Right ventricle myocardium inferior (tissue), 1 donor: ENCODE measurements at regions of chr17 and their contacts with region 1.

Region 1: DNA sequence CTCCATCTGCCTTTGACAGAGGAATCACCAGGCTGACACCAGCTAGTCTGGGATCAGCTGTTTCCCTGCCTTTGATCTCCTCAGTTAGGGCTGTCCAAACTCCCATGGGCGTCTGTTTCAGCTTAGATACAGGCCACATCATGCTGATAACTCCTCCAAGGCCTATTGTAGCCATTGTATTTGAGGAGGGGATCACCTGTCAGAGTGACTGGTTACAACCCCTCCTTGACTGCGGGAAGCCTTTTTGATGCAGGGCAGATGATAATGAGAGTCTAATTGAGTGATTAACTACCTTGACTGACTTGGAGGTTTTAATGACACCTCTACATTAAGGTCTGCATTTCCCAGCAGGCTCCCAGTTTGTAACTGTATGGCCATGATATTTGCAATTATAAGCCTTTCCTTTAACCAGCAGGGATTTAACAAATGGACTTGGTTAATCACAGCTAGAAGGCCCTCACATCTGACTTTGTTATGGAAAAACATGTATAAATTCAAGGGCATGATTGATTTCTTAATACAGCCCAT is 863.5 kb downstream of the KCNJ2 start:
- DNase-seq: no peak
- ATAC-seq: no peak

Region 2: GRCh38 chr17:71099003-71099714 is 66.3 kb after region 1 on chr17:
- intact Hi-C with region 1: loop called (anchors 10 kb)
- DNase-seq: no peak
- ATAC-seq: no peak